ENCODE measurements at regions of chr15 and their contacts with region 1.

Region 1: DNA sequence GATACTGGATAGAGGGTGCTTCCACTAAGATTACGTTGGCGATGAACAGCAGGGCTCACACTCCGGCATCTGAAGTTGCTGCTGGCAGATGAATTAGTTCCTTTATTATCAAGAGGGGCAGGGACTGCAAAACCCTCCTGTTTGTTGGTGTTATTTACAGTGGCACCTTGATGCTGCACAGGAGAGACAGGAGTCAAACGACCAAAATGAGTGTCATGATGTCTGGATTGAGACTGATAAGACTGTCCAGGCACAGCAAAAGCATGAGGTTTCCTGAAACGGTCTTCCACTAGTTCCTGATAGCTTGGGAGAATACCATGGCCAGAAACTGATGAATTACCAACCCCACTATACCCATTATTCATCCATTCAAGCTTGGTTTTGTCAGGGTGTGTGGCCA is 100.8 kb upstream of the NEDD4 start:
- DNase-seq: no peak
- H3K4me3 ChIP-seq: no peak overlapping the region
- CTCF ChIP-seq: no peak

Region 2: GRCh38 chr15:56034514-56034913 is 59.7 kb before region 1 on chr15:
- in situ Hi-C with region 1: loop called (anchors 5 kb)
- DNase-seq: no peak
- H3K4me3 ChIP-seq: no peak overlapping the region
- CTCF ChIP-seq: no peak

Measured in astrocyte of the cerebellum (primary cell).